Activated T-helper 1 cell treated with anti-CD3 and anti-CD28 coated beads, Interleukin-12 subunit alpha, Interleukin-12 subunit beta, Interleukin-2, Interleukin-4 antibody, amounts not matched to agents 30 ng/mL and 10 ng/mL and 1 ng/mL, durations not matched to agents 14 hours and 24 hours and 36 hours (primary cell): ENCODE measurements at regions of chr3 and their contacts with region 1.

Region 1: GRCh38 chr3:40317061-40317855 is 7.8 kb downstream of the EIF1B start:
- DNase-seq: no peak
- H3K4me3 Mint-ChIP-seq: no peak overlapping the region
- H3K27ac Mint-ChIP-seq: no peak overlapping the region
- H3K4me1 Mint-ChIP-seq: peaks cover 1% of the 10 kb centered on the region
- H3K27me3 Mint-ChIP-seq: no peaks in the 10 kb centered on the region

Region 2: GRCh38 chr3:39531650-39532049 is 785.6 kb before region 1 on chr3:
- intact Hi-C with region 1: no loop called
- DNase-seq: no peak
- H3K4me3 Mint-ChIP-seq: no peak overlapping the region
- H3K27ac Mint-ChIP-seq: no peak overlapping the region
- H3K4me1 Mint-ChIP-seq: no peaks in the 10 kb centered on the region
- H3K27me3 Mint-ChIP-seq: peaks cover 13% of the 10 kb centered on the region

Region 3: DNA sequence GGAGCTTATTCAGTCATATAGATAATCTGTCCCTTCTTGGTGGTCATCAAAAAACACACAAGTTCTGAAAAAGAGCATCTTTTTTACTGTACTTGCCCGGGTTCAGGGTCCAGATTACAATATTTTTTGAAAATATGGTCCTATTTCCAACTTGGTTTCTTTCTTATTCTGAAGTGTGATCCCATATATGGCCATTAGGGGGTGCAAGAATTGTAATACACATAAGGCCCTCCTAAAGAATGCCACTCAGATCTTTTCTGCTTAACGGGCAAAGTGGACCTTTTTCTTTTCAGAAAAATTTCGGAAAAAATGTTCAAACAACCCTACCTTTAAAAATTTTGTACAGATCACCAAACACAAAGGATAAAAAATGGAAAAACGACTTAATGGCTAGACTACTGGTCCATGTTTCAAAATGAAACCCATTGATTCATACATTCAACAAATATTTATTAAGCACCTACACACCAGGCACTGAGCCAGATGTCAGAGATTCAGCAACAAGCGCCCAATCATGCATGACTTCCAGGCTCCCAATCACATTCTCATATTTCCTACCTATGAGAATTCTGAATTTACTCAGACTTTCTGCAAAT is 609.8 kb before region 1 on chr3:
- intact Hi-C with region 1: loop called (anchors 1 kb)
- DNase-seq: no peak
- H3K4me3 Mint-ChIP-seq: no peak overlapping the region
- H3K27ac Mint-ChIP-seq: no peak overlapping the region
- H3K4me1 Mint-ChIP-seq: no peaks in the 10 kb centered on the region
- H3K27me3 Mint-ChIP-seq: peaks cover 9% of the 10 kb centered on the region

Region 4: GRCh38 chr3:39990532-39990931 is 326.7 kb before region 1 on chr3:
- intact Hi-C with region 1: loop called (anchors 2 kb)
- DNase-seq: no peak
- H3K4me3 Mint-ChIP-seq: no peak overlapping the region
- H3K27ac Mint-ChIP-seq: no peak overlapping the region
- H3K4me1 Mint-ChIP-seq: no peaks in the 10 kb centered on the region
- H3K27me3 Mint-ChIP-seq: no peaks in the 10 kb centered on the region

Region 5: GRCh38 chr3:40191850-40192448 is 125.3 kb before region 1 on chr3:
- intact Hi-C with region 1: loop called (anchors 1 kb)
- DNase-seq: peak; percentile 35
- H3K4me3 Mint-ChIP-seq: no peak overlapping the region
- H3K27ac Mint-ChIP-seq: no peak overlapping the region
- H3K4me1 Mint-ChIP-seq: no peaks in the 10 kb centered on the region
- H3K27me3 Mint-ChIP-seq: peaks cover 4% of the 10 kb centered on the region

Region 6: DNA sequence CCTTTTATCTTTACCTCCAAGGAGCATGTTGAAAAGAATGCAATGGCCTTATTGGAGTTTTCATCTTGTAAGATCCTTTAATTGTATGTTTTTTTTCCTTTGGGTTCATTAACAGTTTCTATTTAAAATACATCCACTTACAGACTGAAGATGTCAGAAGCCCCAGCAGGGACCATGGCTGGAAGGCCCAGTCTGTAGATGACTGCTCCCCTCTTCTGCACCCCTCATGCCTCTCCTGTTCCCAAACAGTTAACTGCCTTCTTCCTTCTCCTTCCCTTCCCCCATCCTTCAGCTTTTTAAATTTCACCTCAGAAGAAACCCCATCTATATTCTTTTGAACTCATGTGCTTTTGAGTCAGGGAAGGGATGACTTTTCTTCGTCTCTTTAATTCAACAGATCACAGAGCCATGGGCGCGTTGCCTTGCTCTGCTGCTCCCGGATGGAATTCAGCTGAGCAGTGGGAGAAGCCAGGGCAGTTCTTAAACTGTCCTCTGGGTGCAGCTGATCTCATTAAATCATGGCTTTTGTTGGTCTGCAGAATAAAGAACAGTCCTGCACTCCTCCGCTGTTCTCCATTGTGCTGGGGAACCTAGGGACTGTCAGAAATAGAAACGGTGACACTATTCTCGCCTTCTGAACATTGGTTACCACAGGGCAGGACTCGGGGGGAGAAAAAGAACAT is 79.2 kb before region 1 on chr3:
- intact Hi-C with region 1: no loop called
- DNase-seq: no peak
- H3K4me3 Mint-ChIP-seq: no peak overlapping the region
- H3K27ac Mint-ChIP-seq: no peak overlapping the region
- H3K4me1 Mint-ChIP-seq: no peaks in the 10 kb centered on the region
- H3K27me3 Mint-ChIP-seq: peaks cover 2% of the 10 kb centered on the region